Kidney (tissue), 22 donors: ENCODE measurements at regions of chr10 and their contacts with region 1.

Region 1: DNA sequence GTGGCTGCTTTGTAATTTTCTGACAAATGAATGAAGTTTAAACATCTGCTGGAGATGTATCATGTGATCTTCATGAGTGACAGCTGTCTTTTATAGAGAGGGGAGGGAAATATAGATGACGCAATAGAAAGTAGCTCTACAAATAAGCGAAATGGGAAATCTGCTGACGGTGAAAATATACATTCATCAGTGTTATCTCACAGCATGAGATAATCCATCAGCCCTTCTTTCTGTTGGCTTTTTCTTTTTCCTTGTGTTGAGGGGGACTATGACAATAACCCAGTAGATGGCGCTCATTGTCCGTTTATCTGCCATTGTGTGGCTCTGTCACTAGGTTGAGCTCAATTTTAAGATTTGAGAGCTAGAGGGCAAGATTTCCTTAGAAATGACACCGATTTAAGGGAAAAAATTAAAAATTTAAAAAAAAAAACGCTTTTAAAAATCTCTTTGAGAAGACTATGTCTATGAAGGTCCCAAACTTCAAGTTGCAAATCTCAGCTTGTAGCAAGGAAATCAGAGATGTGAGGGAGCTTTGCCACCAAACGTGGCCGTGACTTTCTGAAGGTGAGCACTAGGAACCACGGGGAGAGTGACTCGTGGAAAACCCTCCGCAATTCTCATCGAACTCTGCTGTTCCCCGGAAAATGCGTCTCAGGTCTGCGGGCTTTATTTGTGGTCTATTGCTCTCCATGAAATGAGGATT is 114.6 kb upstream of the SFMBT2 start:
- DNase-seq: peak in 4 of 5 donors; percentile 66 to 89 (median 81)
- H3K4me3 ChIP-seq: no peak overlapping the region
- H3K27ac ChIP-seq: no peak overlapping the region
- H3K4me1 ChIP-seq: no peaks in the 10 kb centered on the region
- H3K27me3 ChIP-seq: peaks cover 11% of the 10 kb centered on the region
- CTCF ChIP-seq: peak; percentile 88

Region 2: DNA sequence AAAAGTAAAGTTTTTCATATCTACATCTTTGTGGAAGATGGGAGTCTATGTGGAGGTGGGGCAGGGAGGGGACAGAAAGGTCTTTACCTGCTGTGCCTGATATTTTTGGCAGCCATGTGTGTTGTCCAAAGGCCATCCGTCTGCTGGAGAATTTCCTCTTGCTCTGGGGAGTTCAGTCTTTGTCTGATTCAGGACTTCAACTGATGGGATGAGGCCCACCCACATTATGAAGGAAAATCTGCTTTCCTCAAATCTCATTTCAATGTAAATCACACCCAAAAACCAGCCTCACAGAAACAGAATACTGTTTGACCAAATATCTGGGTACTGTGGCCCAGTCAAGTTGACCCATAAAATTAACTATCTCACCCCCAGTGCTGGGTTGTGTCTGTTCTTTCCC is 153.8 kb after region 1 on chr10:
- intact Hi-C with region 1: loop called (anchors 5 kb)
- DNase-seq: no peak
- H3K4me3 ChIP-seq: no peak overlapping the region
- H3K27ac ChIP-seq: no peak overlapping the region
- H3K4me1 ChIP-seq: no peaks in the 10 kb centered on the region
- H3K27me3 ChIP-seq: peaks cover 2% of the 10 kb centered on the region
- CTCF ChIP-seq: no peak

Region 3: GRCh38 chr10:7687228-7687907 is 161.9 kb after region 1 on chr10:
- intact Hi-C with region 1: loop called (anchors 5 kb)
- DNase-seq: peak; percentile 85 to 96 (median 91)
- H3K4me3 ChIP-seq: no peak overlapping the region
- H3K27ac ChIP-seq: no peak overlapping the region
- H3K4me1 ChIP-seq: no peaks in the 10 kb centered on the region
- H3K27me3 ChIP-seq: no peaks in the 10 kb centered on the region
- CTCF ChIP-seq: peak; percentile 98